A673 (cell line): ENCODE measurements at regions of chr6 and their contacts with region 1.

Region 1: GRCh38 chr6:129251669-129252376 is 368.9 kb downstream of the LAMA2 start:
- DNase-seq: peak; percentile 83
- H3K4me3 ChIP-seq: no peak overlapping the region
- H3K27ac ChIP-seq: no peak overlapping the region
- H3K4me1 ChIP-seq: peaks cover 7% of the 10 kb centered on the region
- H3K27me3 ChIP-seq: no peaks in the 10 kb centered on the region
- CTCF ChIP-seq: peak; percentile 92

Region 2: DNA sequence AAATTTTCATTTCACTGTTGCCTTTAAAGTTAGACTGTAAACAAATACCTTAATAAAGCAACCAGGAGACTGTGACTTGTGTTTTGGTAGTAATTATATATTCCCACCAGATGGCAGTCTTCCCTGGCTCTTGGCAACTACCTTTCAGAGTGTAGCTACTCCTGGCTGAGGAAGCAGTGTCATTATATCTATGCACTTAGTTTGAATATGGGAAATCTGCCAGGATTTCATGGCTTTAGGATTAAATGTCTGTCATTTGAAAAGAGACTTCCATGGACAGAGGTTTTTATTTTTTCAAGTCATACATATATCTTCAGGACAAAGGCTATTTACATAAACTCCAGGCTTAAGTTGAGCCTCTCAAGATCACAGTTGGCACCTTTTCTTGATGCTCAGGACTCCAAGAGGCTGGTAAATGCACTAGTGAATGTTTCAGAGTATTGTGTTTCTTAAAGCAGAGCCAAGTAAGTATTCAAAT is 1514.8 kb before region 1 on chr6:
- CTCF ChIA-PET with region 1: no interaction called
- POLR2A ChIA-PET with region 1: no interaction called
- intact Hi-C with region 1: loop called (anchors 1 kb)
- DNase-seq: peak; percentile 93
- H3K4me3 ChIP-seq: no peak overlapping the region
- H3K27ac ChIP-seq: no peak overlapping the region
- H3K4me1 ChIP-seq: peaks cover 7% of the 10 kb centered on the region
- H3K27me3 ChIP-seq: no peaks in the 10 kb centered on the region
- CTCF ChIP-seq: peak; percentile 72

Region 3: DNA sequence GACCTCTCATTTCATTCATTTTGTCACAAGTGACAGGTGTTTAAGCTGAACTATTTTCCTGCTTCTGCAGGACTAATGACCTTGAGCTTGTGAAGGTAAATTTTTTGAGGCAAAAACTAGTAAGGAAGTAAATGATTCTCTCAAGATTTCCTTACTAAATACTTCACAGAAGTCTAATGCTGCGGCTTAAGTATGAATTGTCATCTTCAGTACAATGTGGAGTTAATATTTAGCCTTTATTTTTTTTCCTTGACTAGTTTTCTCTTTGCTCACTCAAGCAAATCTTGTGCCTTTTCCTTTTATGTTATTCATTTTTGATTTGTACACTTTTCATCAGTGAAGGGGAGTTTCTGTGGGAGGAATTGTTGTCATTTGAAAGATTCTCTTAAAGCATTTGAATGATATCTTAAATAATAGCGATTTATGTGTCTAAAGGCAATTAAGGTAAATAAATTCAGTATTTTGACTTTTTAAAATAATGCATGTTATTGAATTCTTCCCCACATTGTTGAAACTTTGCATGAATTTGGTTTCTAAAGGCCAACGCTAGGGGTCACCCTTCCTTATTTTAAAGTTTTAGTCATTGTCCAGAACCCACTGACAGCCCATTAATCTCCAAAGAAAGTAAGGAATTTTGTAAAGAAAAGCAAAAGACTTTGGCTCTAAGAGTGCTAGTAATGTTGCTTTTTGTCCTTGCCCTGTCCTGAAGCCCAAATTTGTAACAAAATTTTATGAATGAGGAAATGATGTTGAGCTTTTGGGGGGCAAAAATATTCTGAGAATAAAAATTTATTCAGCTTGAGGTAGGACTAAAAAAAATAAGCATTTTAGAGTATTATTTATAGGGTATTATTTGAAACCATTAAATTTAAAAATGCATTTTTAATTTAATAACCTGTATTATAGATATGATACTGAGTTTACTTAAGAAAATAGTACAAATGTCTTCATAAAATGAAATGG is 526.3 kb before region 1 on chr6:
- CTCF ChIA-PET with region 1: interaction called, 3 read pairs
- POLR2A ChIA-PET with region 1: no interaction called
- intact Hi-C with region 1: loop called (anchors 5 kb)
- DNase-seq: peak; percentile 60
- H3K4me3 ChIP-seq: no peak overlapping the region
- H3K27ac ChIP-seq: no peak overlapping the region
- H3K4me1 ChIP-seq: peaks cover 8% of the 10 kb centered on the region
- H3K27me3 ChIP-seq: no peaks in the 10 kb centered on the region
- CTCF ChIP-seq: peak; percentile 81

Region 4: GRCh38 chr6:128807577-128807976 is 444.2 kb before region 1 on chr6:
- CTCF ChIA-PET with region 1: interaction called, 8 read pairs
- POLR2A ChIA-PET with region 1: no interaction called
- intact Hi-C with region 1: loop called (anchors 2 kb)
- DNase-seq: peak; percentile 75
- H3K4me3 ChIP-seq: no peak overlapping the region
- H3K27ac ChIP-seq: no peak overlapping the region
- H3K4me1 ChIP-seq: peaks cover 18% of the 10 kb centered on the region
- H3K27me3 ChIP-seq: no peaks in the 10 kb centered on the region
- CTCF ChIP-seq: peak; percentile 63

Region 5: GRCh38 chr6:129094147-129094546 is 157.7 kb before region 1 on chr6:
- CTCF ChIA-PET with region 1: no interaction called
- POLR2A ChIA-PET with region 1: no interaction called
- intact Hi-C with region 1: no loop called
- DNase-seq: no peak
- H3K4me3 ChIP-seq: no peak overlapping the region
- H3K27ac ChIP-seq: no peak overlapping the region
- H3K4me1 ChIP-seq: no peaks in the 10 kb centered on the region
- H3K27me3 ChIP-seq: no peaks in the 10 kb centered on the region
- CTCF ChIP-seq: no peak